ENCODE measurements at regions of chr2 and their contacts with region 1.

Region 1: GRCh38 chr2:28870146-28870891 is at the start of gene TRMT61B:
- H3K4me3 ChIP-seq: peak within 1 kb of the TSS; percentile 80
- H3K27ac ChIP-seq: peak within 1 kb of the TSS; percentile 66
- H3K4me1 ChIP-seq: 0 out of 2 replicates have a peak, but pooled peaks cover 5% of the 10 kb centered on the region
- CTCF ChIP-seq: no peak

Region 2: GRCh38 chr2:28855977-28856376 is 14.3 kb before region 1 on chr2:
- CTCF ChIA-PET with region 1: no interaction called
- POLR2A ChIA-PET with region 1: interaction called, 10 read pairs
- H3K4me3 ChIP-seq: no peak overlapping the region
- H3K27ac ChIP-seq: no peak overlapping the region
- H3K4me1 ChIP-seq: no peaks in the 10 kb centered on the region
- CTCF ChIP-seq: no peak

Region 3: DNA sequence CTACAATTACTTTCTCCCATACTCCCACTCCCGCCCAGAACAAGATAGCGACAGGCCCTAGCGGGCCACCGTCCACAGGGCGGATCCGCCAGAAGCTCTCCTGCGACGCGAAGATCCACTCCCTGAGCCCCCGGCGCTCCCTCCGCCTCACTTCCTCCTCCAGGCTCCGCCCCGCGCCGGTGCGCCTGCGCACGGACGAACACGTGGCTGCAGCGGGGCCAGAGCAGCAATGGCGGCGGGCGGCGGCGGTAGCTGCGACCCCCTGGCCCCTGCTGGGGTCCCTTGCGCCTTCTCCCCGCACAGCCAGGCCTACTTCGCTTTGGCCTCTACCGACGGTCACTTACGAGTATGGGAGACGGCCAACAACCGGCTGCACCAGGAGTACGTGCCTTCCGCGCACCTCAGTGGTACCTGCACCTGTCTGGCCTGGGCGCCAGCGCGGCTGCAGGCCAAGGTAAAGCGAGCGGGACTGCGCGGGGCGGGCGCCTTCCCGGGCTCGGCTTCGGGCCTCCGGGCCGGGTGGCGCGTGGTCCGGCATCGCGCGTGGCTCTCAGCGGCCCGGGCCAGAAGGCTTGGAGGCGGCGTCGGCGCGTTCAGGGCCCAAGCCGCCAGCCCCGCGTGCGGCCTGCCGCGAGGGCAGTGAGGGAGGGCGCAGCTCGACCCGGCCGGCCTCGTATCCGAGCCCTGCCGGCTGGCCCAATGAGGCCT is 24.3 kb after region 1 on chr2 and contains the start of gene WDR43:
- CTCF ChIA-PET with region 1: no interaction called
- POLR2A ChIA-PET with region 1: interaction called, 32 read pairs
- H3K4me3 ChIP-seq: peak within 1 kb of the TSS; percentile 95
- H3K27ac ChIP-seq: peak within 1 kb of the TSS; percentile 92
- H3K4me1 ChIP-seq: peaks cover 21% of the 10 kb centered on the region
- CTCF ChIP-seq: no peak

Measured in HEK293 (cell line).